Lower leg skin (tissue), 4 donors: ENCODE measurements at regions of chr15 and their contacts with region 1.

Region 1: GRCh38 chr15:70132139-70132538 is 34.4 kb upstream of the TLE3 start:
- DNase-seq: no peak
- H3K4me3 ChIP-seq: no peak overlapping the region
- CTCF ChIP-seq: no peak
- POLR2A ChIP-seq: no peak

Region 2: GRCh38 chr15:70447928-70448698 is 316.0 kb after region 1 on chr15:
- intact Hi-C with region 1: loop called (anchors 10 kb)
- DNase-seq: no peak
- H3K4me3 ChIP-seq: no peak overlapping the region
- CTCF ChIP-seq: no peak
- POLR2A ChIP-seq: no peak